ENCODE measurements at regions of chr7 and their contacts with region 1.

Region 1: DNA sequence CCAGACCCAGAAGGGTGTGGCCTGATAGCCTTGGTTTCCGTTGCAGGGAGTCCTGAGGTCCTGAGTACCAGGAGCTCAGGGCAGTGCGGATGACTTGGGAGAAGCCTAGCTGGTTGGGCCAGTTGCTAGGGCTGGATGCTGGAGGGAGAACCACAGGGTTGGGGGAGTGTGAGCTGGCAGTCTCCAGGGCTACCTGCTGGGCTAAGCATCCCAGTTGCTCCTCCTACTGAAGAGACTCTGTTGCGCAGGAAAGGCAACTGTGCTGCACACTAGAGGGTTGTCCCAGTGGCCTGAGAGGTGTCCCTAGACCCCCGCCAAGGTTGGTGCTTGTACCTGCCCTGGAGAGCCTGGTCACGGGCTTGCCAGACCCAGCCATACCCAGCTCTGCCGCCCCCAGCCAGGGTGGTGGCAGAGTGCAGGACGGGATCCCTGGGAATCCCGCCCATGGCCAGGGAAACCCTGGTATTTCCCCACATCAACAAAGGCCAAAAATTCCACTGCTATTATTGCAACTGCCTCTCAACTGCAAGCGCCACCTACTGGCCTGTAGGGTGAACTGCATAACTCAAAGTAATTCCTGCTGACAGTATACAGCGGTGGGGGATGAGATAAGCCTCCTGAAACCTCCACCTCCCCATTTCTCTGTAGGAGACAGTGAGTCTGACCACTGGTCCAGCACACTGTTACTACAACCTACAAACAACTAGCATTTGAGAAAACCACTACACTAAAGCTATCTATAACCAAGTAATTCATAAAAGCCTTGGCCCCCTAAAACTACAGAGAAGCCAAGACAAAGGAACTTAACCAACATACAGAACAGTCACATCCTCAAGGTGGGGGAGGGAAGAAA is 67.6 kb upstream of the DDC start:
- DNase-seq: peak; percentile 31 to 78 (median 48)
- ATAC-seq: peak; percentile 76
- H3K4me3 ChIP-seq: no peak overlapping the region
- H3K4me3 Mint-ChIP-seq: no peak overlapping the region
- H3K27ac ChIP-seq: no peak overlapping the region
- H3K27ac Mint-ChIP-seq: no peak overlapping the region
- H3K4me1 ChIP-seq: peaks cover 6% of the 10 kb centered on the region
- H3K4me1 Mint-ChIP-seq: no peaks in the 10 kb centered on the region
- H3K27me3 ChIP-seq: peaks cover 0 to 4% of the 10 kb centered on the region in 2 experiments
- H3K27me3 Mint-ChIP-seq: peaks cover 7% of the 10 kb centered on the region
- CTCF ChIP-seq: peak; percentile 96

Region 2: GRCh38 chr7:50142425-50143017 is 490.3 kb before region 1 on chr7:
- CTCF ChIA-PET with region 1: no interaction called
- POLR2A ChIA-PET with region 1: no interaction called
- intact Hi-C with region 1: loop called in 1 of 2 experiments (anchors 2 kb)
- DNase-seq: peak in 7 of 14 experiments; percentile 24 to 83 (median 66)
- ATAC-seq: peak; percentile 75
- H3K4me3 ChIP-seq: no peak overlapping the region
- H3K4me3 Mint-ChIP-seq: peak overlapping the region; percentile 44
- H3K27ac ChIP-seq: no peak overlapping the region
- H3K27ac Mint-ChIP-seq: peak overlapping the region; percentile 35
- H3K4me1 ChIP-seq: peaks cover 15% of the 10 kb centered on the region
- H3K4me1 Mint-ChIP-seq: peaks cover 33% of the 10 kb centered on the region
- H3K27me3 ChIP-seq: no peaks in the 10 kb centered on the region
- H3K27me3 Mint-ChIP-seq: no peaks in the 10 kb centered on the region
- CTCF ChIP-seq: peak; percentile 83

Region 3: DNA sequence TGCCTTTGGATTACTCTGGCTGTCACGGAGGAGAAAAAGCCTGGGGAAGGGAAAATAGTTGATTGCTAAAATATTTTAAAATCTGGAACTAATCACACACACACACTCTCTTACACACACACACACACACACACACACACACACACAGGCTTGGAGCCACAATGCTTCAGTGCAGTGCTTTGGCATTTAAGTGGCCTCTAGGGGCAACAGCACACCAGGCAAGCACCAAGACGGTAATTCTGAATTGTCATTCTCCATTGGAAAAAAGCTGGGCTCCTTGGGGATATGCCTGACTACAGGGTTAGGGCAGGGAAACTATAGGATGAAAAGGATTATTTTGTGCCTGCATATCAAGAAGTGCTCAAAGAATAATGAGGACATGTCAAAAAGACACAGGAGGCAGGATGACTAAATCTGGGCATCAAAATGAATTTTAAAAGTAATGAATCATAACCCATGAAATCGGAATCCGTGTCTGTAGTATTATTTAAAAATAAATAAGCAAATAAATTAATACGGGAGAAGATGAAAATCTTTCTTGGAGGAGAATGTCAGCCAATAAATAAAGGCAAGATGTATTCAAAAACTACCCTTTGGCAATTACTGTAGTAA is 37.2 kb before region 1 on chr7:
- CTCF ChIA-PET with region 1: no interaction called
- POLR2A ChIA-PET with region 1: no interaction called
- intact Hi-C with region 1: loop called (anchors 1 to 2 kb)
- DNase-seq: peak in 6 of 14 experiments; percentile 7 to 52 (median 34)
- ATAC-seq: no peak
- H3K4me3 ChIP-seq: no peak overlapping the region
- H3K4me3 Mint-ChIP-seq: no peak overlapping the region
- H3K27ac ChIP-seq: no peak overlapping the region
- H3K27ac Mint-ChIP-seq: no peak overlapping the region
- H3K4me1 ChIP-seq: peaks cover 8% of the 10 kb centered on the region
- H3K4me1 Mint-ChIP-seq: peaks cover 13% of the 10 kb centered on the region
- H3K27me3 ChIP-seq: no peaks in the 10 kb centered on the region
- H3K27me3 Mint-ChIP-seq: no peaks in the 10 kb centered on the region
- CTCF ChIP-seq: no peak

Measured in CD4-positive, alpha-beta T cell (primary cell).